ENCODE measurements at regions of chr14 and their contacts with region 1.

Region 1: GRCh38 chr14:73472185-73473114 is 14.1 kb upstream of the NUMB start:
- DNase-seq: no peak
- H3K4me3 ChIP-seq: no peak overlapping the region
- H3K27ac ChIP-seq: no peak overlapping the region
- H3K4me1 ChIP-seq: no peaks in the 10 kb centered on the region
- H3K27me3 ChIP-seq: no peaks in the 10 kb centered on the region
- CTCF ChIP-seq: peak; percentile 57 to 89 (median 78)
- POLR2A ChIP-seq: no peak

Region 2: DNA sequence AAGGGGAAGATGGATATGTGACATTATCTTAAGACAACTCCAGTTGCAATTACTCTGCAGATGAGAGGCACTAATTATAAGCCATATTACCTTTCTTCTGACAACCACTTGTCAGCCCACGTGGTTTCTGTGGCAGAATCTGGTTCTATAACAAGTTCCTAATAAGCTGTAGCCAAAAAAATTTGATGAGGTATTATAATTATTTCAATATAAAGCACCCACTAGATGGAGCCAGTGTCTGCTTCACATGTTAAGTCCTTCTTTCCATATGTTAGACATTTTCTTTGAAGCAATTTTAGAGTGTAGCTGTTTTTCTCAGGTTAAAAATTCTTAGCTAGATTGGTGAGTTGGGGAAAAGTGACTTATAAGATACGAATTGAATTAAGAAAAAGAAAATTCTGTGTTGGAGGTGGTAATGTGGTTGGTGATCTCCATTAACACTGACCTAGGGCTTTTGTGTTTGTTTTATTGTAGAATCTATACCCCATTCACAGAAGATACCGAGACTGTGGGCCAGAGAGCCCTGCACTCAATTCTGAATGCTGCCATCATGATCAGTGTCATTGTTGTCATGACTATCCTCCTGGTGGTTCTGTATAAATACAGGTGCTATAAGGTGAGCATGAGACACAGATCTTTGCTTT is 299.2 kb before region 1 on chr14:
- intact Hi-C with region 1: loop called (anchors 5 kb)
- DNase-seq: no peak
- H3K4me3 ChIP-seq: no peak overlapping the region
- H3K27ac ChIP-seq: no peak overlapping the region
- H3K4me1 ChIP-seq: no peaks in the 10 kb centered on the region
- H3K27me3 ChIP-seq: no peaks in the 10 kb centered on the region
- CTCF ChIP-seq: peak; percentile 49 to 60 (median 55)
- POLR2A ChIP-seq: no peak

Region 3: DNA sequence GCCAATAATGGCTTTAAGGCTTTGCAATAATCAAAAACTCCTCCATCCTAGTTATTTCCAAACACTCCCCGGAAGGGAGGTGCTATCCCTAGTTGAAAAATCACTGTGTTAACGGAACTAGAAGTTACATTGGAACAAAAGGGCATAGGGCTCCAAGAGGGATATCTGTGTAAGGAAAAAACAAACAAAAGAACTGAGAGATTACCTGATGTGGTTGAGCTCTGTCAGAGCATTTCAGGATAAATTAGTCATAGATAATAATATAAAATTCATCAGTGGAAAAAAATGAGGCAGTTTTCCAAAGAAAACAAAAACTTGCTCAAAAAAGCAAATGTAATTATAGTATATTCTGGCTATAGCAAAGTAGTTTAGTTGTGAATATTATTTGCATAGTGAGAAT is 262.5 kb before region 1 on chr14:
- intact Hi-C with region 1: no loop called
- DNase-seq: no peak
- H3K4me3 ChIP-seq: no peak overlapping the region
- H3K27ac ChIP-seq: no peak overlapping the region
- H3K4me1 ChIP-seq: no peaks in the 10 kb centered on the region
- H3K27me3 ChIP-seq: no peaks in the 10 kb centered on the region
- CTCF ChIP-seq: no peak
- POLR2A ChIP-seq: no peak

Region 4: DNA sequence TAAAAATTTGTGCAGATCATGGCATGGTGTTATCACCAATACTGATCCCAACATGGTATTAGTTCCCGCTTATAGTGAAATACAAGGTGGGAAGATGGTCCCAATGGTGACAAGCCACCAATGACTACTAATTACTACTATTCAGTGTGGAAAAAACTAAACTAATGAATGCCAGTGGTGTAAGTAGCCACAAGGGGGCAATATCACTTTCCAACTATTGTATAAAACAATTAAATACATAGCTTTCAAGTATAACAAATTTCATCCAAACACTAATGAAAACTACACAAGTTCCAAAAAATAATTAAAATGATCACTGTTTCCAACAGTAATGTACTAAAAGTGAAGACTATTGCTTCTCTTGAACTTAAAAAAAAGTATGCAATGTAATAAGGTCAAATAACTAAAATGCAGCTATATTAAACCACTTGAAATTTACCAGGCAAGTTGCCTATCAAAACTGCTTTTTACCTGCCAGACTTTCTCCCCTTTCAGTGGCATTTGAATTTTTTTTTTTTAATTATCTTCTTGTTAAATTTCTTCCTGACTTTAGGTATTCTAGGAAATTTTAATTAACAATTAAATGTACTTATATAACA is 177.2 kb before region 1 on chr14:
- intact Hi-C with region 1: loop called (anchors 5 kb)
- DNase-seq: no peak
- H3K4me3 ChIP-seq: no peak overlapping the region
- H3K27ac ChIP-seq: no peak overlapping the region
- H3K4me1 ChIP-seq: no peaks in the 10 kb centered on the region
- H3K27me3 ChIP-seq: no peaks in the 10 kb centered on the region
- CTCF ChIP-seq: peak; percentile 59 to 70 (median 60)
- POLR2A ChIP-seq: no peak

Region 5: DNA sequence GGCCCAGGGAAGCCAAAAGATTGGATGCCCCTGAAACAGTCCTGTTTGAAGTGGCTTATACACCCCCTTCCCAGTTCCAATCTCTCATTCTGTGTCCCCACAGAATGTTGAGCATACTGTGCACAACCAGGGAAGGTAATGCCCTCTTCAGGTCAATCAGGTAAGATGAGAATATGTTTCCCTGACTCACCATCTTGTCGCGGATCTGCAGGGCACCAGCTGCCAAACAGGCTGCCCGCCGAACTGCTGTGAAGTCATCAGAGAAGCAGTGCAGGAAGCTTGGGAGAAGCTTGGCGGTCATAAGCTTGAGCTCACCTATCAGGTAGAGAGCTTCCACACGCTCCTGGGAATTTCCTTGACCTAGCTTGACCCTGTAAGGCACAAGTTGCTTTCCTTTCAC is 27.9 kb after region 1 on chr14:
- intact Hi-C with region 1: no loop called
- DNase-seq: no peak
- H3K4me3 ChIP-seq: no peak overlapping the region
- H3K27ac ChIP-seq: no peak overlapping the region
- H3K4me1 ChIP-seq: no peaks in the 10 kb centered on the region
- H3K27me3 ChIP-seq: no peaks in the 10 kb centered on the region
- CTCF ChIP-seq: no peak
- POLR2A ChIP-seq: no peak